Activated B cell treated with CpG ODN at 0.5 μM for 24 hours (primary cell): ENCODE measurements at regions of chr2 and their contacts with region 1.

Region 1: GRCh38 chr2:64914735-64915509 is 74.3 kb upstream of the SLC1A4 start:
- DNase-seq: no peak
- ATAC-seq: peak; percentile 73
- H3K4me3 Mint-ChIP-seq: peak overlapping the region; percentile 71
- H3K27ac Mint-ChIP-seq: peak overlapping the region; percentile 94
- H3K4me1 Mint-ChIP-seq: peaks cover 68% of the 10 kb centered on the region
- H3K27me3 Mint-ChIP-seq: no peaks in the 10 kb centered on the region
- CTCF ChIP-seq: no peak

Region 2: DNA sequence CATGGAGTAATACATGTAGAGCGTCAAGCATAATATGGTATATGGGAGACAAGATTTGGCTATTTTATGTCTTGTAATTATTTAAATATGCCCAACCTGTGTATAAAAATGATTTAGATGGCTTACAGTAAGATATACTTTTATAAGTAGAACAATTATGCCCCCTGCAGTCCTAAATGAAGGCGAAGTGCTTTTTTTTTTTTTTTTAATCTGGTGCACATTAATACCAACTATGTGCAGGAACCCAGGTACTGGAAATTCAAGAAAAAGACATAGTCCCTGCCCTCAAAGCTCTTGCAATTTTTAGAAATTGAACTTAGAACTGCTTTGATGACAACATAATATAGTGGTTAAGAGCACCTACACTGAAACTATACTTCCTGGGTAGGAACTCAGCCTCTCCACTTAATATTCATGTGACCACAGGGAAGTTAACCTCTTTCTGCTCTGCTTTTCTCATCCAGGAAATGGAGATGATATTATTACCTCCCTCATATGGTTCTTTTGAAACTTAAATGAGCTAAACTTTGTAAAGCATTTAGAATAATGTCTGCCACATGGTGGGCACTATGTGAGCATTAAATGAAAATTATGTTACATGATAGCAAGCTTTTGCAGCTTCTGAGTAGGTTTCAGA is 352.7 kb before region 1 on chr2:
- CTCF ChIA-PET with region 1: no interaction called
- POLR2A ChIA-PET with region 1: no interaction called
- intact Hi-C with region 1: no loop called
- DNase-seq: no peak
- ATAC-seq: peak; percentile 52
- H3K4me3 Mint-ChIP-seq: no peak overlapping the region
- H3K27ac Mint-ChIP-seq: no peak overlapping the region
- H3K4me1 Mint-ChIP-seq: peaks cover 34% of the 10 kb centered on the region
- H3K27me3 Mint-ChIP-seq: no peaks in the 10 kb centered on the region
- CTCF ChIP-seq: no peak

Region 3: GRCh38 chr2:64586883-64587481 is 327.9 kb before region 1 on chr2:
- CTCF ChIA-PET with region 1: interaction called, 3 read pairs
- POLR2A ChIA-PET with region 1: interaction called, 3 read pairs
- intact Hi-C with region 1: loop called (anchors 2 kb)
- DNase-seq: no peak
- ATAC-seq: peak; percentile 62
- H3K4me3 Mint-ChIP-seq: no peak overlapping the region
- H3K27ac Mint-ChIP-seq: peak overlapping the region; percentile 50
- H3K4me1 Mint-ChIP-seq: peaks cover 17% of the 10 kb centered on the region
- H3K27me3 Mint-ChIP-seq: no peaks in the 10 kb centered on the region
- CTCF ChIP-seq: peak; percentile 77

Region 4: DNA sequence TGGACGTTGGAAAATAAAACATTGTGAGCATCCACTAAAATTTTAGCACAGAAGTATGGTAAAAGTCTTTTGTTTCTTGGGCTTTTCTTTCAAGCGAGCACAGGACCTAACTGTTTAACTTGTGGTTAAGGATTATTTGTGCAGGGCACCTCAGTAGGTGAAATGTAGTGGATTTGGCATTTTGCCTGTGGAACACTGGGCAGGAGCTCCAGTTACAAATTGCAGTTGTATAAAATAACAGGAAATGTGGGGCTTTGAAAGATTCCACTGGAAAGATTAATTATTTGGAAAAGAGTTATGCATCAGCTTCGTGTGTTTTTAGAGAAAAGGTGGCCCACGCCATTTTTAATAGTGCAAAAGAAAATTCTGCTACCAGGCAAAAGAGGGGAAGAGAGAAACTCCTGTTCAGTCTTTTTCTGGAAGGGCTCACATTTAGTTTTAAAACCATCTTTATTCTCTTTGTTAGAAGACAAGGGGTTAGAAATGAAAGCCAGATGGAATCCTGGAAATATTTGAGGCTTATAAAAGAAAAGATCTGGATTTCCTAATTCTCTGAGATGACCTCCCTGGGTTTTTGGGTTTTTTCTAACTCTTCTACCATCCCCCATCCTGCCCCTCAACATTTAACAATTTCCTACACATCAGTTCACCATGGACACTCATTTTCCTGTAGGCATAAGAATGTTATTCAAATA is 116.9 kb before region 1 on chr2:
- CTCF ChIA-PET with region 1: no interaction called
- POLR2A ChIA-PET with region 1: no interaction called
- intact Hi-C with region 1: no loop called
- DNase-seq: no peak
- ATAC-seq: no peak
- H3K4me3 Mint-ChIP-seq: no peak overlapping the region
- H3K27ac Mint-ChIP-seq: no peak overlapping the region
- H3K4me1 Mint-ChIP-seq: peaks cover 7% of the 10 kb centered on the region
- H3K27me3 Mint-ChIP-seq: no peaks in the 10 kb centered on the region
- CTCF ChIP-seq: no peak

Region 5: GRCh38 chr2:64859312-64860212 is 55.4 kb before region 1 on chr2:
- CTCF ChIA-PET with region 1: no interaction called
- POLR2A ChIA-PET with region 1: interaction called, 17 read pairs
- intact Hi-C with region 1: no loop called
- DNase-seq: peak; percentile 44
- ATAC-seq: peak; percentile 19
- H3K4me3 Mint-ChIP-seq: peak overlapping the region; percentile 76
- H3K27ac Mint-ChIP-seq: peak overlapping the region; percentile 94
- H3K4me1 Mint-ChIP-seq: peaks cover 36% of the 10 kb centered on the region
- H3K27me3 Mint-ChIP-seq: no peaks in the 10 kb centered on the region
- CTCF ChIP-seq: no peak

Region 6: GRCh38 chr2:64945973-64946768 is 31.2 kb after region 1 on chr2:
- CTCF ChIA-PET with region 1: interaction called, 45 read pairs
- POLR2A ChIA-PET with region 1: interaction called, 12 read pairs
- intact Hi-C with region 1: loop called (anchors 2 kb)
- DNase-seq: peak; percentile 61
- ATAC-seq: peak; percentile 93
- H3K4me3 Mint-ChIP-seq: peak overlapping the region; percentile 78
- H3K27ac Mint-ChIP-seq: peak overlapping the region; percentile 93
- H3K4me1 Mint-ChIP-seq: peaks cover 69% of the 10 kb centered on the region
- H3K27me3 Mint-ChIP-seq: no peaks in the 10 kb centered on the region
- CTCF ChIP-seq: no peak

Region 7: GRCh38 chr2:65024149-65024829 is 109.4 kb after region 1 on chr2:
- CTCF ChIA-PET with region 1: interaction called, 13 read pairs
- POLR2A ChIA-PET with region 1: interaction called, 13 read pairs
- intact Hi-C with region 1: loop called (anchors 1 kb)
- DNase-seq: no peak
- ATAC-seq: no peak
- H3K4me3 Mint-ChIP-seq: peak overlapping the region; percentile 29
- H3K27ac Mint-ChIP-seq: peak overlapping the region; percentile 63
- H3K4me1 Mint-ChIP-seq: peaks cover 58% of the 10 kb centered on the region
- H3K27me3 Mint-ChIP-seq: no peaks in the 10 kb centered on the region
- CTCF ChIP-seq: no peak

Region 8: GRCh38 chr2:65129826-65130663 is 215.1 kb after region 1 on chr2 and contains the start of gene RAB1A:
- CTCF ChIA-PET with region 1: no interaction called
- POLR2A ChIA-PET with region 1: interaction called, 4 read pairs
- intact Hi-C with region 1: loop called (anchors 1 kb)
- DNase-seq: peak; percentile 91
- ATAC-seq: peak; percentile 93
- H3K4me3 Mint-ChIP-seq: peak within 1 kb of the TSS; percentile 100
- H3K27ac Mint-ChIP-seq: peak within 1 kb of the TSS; percentile 100
- H3K4me1 Mint-ChIP-seq: peaks cover 49% of the 10 kb centered on the region
- H3K27me3 Mint-ChIP-seq: no peaks in the 10 kb centered on the region
- CTCF ChIP-seq: no peak
- total RNA-seq, gene RAB1A: 45.0 and 46.4 TPM in 2 replicates

Region 9: GRCh38 chr2:65576861-65577601 is 662.1 kb after region 1 on chr2:
- CTCF ChIA-PET with region 1: no interaction called
- POLR2A ChIA-PET with region 1: no interaction called
- intact Hi-C with region 1: loop called (anchors 2 kb)
- DNase-seq: no peak
- ATAC-seq: no peak
- H3K4me3 Mint-ChIP-seq: no peak overlapping the region
- H3K27ac Mint-ChIP-seq: no peak overlapping the region
- H3K4me1 Mint-ChIP-seq: peaks cover 6% of the 10 kb centered on the region
- H3K27me3 Mint-ChIP-seq: peaks cover 2% of the 10 kb centered on the region
- CTCF ChIP-seq: no peak